Calu3 (cell line): ENCODE measurements at regions of chr10 and their contacts with region 1.

Region 1: DNA sequence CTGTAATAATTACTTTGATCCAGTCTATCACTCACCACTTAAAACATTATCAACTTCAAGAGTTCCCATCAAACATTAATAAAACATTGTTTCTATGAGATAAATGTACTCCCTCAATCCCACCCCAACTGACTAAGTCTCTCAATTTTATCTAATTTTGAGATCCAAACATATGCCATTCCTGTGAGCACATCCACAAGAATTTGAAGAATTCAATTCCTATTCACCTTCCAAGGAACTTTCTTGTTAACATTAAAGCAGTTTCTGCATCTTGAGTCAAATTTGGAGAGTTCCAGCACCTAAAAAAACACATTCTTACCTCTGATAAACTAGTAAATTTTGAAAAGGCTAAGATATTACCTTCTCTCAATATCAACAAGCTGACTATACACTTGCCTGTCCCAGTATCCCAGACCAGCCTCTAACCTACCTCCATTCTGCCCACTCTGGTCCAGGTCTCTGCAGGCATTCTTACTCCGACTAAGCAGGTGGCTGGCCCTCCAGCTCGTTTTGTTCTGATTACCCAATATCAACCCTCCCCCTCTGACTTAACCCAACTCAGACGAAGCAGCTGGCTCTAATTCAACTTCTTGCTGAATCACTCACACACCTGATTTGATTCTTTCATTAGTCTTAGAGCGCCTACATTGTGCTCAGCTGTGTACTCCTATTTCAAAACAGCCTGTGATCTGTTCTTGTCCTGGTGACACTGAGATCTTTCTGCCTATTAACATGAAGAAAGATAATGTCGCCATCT is 275.2 kb downstream of the IPMK start:
- DNase-seq: peak; percentile 85
- H3K4me3 Mint-ChIP-seq: peak overlapping the region; percentile 74
- H3K27ac Mint-ChIP-seq: peak overlapping the region; percentile 82
- H3K4me1 Mint-ChIP-seq: peaks cover 50% of the 10 kb centered on the region
- H3K27me3 Mint-ChIP-seq: no peaks in the 10 kb centered on the region
- CTCF ChIP-seq: no peak

Region 2: DNA sequence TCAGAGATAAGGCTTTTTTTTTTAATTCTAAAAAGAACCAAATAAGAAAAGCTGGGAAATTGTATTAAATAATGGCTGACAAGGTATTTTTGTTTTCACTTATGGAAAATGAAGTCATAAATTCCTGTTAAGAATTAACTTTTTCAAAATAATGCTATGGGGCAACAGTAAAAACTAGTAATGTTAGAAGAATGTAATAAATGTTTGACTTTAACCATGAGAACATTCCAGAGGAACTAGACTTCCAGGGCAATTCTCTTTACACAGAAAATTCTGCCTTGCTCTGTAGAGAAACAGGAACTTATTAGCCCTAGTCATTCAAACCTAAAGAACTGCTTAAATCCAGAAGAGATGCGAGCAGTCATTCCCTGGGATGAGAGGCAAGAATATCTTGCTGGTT is 295.9 kb before region 1 on chr10:
- CTCF ChIA-PET with region 1: interaction called, 3 read pairs
- intact Hi-C with region 1: loop called (anchors 5 kb)
- DNase-seq: peak; percentile 13
- H3K4me3 Mint-ChIP-seq: peak overlapping the region; percentile 46
- H3K27ac Mint-ChIP-seq: peak overlapping the region; percentile 98
- H3K4me1 Mint-ChIP-seq: peaks cover 87% of the 10 kb centered on the region
- H3K27me3 Mint-ChIP-seq: no peaks in the 10 kb centered on the region
- CTCF ChIP-seq: no peak

Region 3: GRCh38 chr10:57785546-57786284 is 206.8 kb before region 1 on chr10:
- CTCF ChIA-PET with region 1: no interaction called
- intact Hi-C with region 1: loop called (anchors 2 kb)
- DNase-seq: peak; percentile 76
- H3K4me3 Mint-ChIP-seq: peak overlapping the region; percentile 14
- H3K27ac Mint-ChIP-seq: peak overlapping the region; percentile 83
- H3K4me1 Mint-ChIP-seq: peaks cover 69% of the 10 kb centered on the region
- H3K27me3 Mint-ChIP-seq: no peaks in the 10 kb centered on the region
- CTCF ChIP-seq: no peak

Region 4: DNA sequence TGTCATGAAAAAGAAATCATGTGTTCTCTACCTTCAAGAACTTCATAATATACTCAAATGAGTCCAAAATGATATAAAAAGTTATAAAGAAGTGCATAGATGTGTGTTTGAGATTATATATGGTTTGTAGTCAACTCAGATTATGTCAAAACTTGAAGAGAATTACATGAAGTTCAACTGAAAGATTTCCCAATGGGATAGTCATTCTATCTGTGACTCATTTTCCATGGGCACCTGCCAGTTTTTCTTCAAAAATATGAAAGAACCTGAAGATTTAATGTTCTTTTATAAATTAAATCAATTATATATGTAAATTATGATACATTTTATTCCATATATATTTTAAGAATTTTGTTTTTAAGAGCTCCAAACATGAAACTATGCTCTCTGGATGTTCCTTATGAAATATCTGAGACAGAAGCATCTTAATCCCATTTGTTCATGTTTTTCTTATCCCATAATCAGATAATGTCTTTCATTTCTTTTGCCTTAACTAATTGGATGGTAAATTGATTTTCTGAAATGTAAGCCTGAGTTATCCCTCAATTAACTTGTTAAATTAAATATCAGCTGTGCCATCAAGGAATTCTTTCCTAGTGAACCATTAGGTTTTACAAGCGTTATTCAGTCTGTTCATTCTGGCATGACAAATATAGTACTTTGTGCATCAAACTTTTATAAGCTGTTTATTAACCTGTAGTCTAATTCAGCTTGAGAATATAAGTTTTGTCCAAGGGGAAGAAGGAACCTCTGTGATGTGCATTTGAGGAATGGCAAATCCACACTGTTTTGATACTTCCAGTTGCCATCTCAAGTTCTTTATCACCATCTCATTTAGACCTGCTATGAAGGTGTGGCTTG is 111.8 kb before region 1 on chr10:
- CTCF ChIA-PET with region 1: no interaction called
- intact Hi-C with region 1: loop called (anchors 5 kb)
- DNase-seq: no peak
- H3K4me3 Mint-ChIP-seq: no peak overlapping the region
- H3K27ac Mint-ChIP-seq: no peak overlapping the region
- H3K4me1 Mint-ChIP-seq: peaks cover 63% of the 10 kb centered on the region
- H3K27me3 Mint-ChIP-seq: no peaks in the 10 kb centered on the region
- CTCF ChIP-seq: no peak

Region 5: DNA sequence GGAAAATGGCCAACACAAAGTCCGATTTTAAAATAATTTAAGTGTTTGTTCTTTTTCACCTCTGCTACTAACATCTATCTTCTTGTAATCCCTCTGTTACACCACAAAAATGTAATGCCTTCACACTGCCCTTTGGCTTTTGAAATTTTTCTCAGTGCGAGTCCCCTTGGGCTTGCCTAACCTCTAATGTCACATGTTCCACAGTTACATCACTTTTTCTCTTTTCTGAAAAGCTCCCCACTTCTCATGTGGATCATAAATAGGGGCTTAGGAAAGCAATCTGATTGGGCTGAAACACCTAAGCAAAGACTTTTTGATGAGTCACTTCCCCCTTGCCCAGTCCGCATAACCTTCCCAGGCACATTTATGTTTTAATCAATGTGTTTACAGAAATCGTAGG is 13.0 kb before region 1 on chr10:
- CTCF ChIA-PET with region 1: interaction called, 10 read pairs
- intact Hi-C with region 1: no loop called
- DNase-seq: peak; percentile 39
- H3K4me3 Mint-ChIP-seq: peak overlapping the region; percentile 46
- H3K27ac Mint-ChIP-seq: peak overlapping the region; percentile 91
- H3K4me1 Mint-ChIP-seq: peaks cover 81% of the 10 kb centered on the region
- H3K27me3 Mint-ChIP-seq: no peaks in the 10 kb centered on the region
- CTCF ChIP-seq: no peak

Region 6: DNA sequence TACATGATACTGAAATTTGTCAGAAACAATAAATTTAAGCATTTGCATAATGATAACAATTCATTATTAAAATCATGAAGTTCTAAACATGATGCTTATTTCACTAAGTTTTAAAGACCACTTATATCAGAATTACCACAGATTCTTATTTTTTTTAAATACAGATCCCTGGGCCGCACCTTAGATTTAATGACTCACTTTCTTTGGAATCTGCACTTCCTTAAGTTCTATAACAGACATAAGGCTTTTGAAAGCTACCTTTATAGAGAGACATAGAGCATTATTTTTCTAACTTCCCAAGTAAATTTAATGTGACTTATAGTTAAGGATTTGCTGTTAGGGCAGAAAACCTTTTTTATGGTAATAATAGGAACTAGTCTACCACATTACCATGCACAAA is 60.3 kb after region 1 on chr10:
- CTCF ChIA-PET with region 1: interaction called, 3 read pairs
- intact Hi-C with region 1: loop called (anchors 2 kb)
- DNase-seq: no peak
- H3K4me3 Mint-ChIP-seq: no peak overlapping the region
- H3K27ac Mint-ChIP-seq: peak overlapping the region; percentile 29
- H3K4me1 Mint-ChIP-seq: peaks cover 17% of the 10 kb centered on the region
- H3K27me3 Mint-ChIP-seq: no peaks in the 10 kb centered on the region
- CTCF ChIP-seq: no peak

Region 7: GRCh38 chr10:58311026-58311425 is 318.5 kb after region 1 on chr10:
- CTCF ChIA-PET with region 1: no interaction called
- intact Hi-C with region 1: no loop called
- DNase-seq: no peak
- H3K4me3 Mint-ChIP-seq: no peak overlapping the region
- H3K27ac Mint-ChIP-seq: no peak overlapping the region
- H3K4me1 Mint-ChIP-seq: no peaks in the 10 kb centered on the region
- H3K27me3 Mint-ChIP-seq: no peaks in the 10 kb centered on the region
- CTCF ChIP-seq: no peak